H1 (cell line): ENCODE measurements at regions of chr6 and their contacts with region 1.

Region 1: DNA sequence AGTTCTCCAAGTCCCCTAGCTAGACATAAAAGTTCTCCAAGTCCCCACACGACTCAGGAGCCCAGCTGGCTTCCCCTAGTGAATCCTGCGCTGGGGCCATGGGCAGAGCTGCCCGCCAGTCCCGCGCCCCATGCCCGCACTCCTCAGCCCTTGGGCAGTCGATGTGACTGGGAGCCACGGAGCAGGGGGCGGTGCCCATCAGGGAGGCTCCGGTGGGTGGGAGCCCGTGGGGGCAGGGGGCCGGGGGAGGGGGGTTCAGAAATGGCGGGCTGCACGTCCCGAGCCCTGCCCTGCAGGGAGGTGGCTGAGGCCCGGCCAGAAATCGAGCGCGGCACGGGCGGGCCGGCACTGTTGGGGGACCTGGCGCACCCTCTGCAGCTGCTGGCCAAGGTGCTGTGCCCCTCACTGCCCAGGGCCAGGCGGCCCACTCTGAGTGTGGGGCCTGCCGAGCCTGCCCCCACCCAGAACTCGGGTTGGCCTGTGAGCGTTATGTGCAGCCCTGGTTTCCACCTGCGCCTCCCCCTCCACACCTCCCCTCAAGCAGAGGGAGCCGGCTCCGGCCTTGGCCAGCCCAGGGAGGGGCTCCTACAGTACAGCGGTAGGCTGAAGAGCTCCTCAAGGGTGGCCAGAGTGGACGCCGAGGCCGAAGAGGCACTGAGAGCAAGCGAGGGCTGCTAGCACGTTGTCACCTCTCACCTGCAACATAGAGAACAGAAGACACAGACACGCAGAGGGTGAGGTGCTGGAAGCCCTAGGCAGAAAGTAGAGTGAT is 11.4 kb downstream of the GSTA5 start:
- DNase-seq: no peak
- H3K4me3 ChIP-seq: no peak overlapping the region
- H3K27ac ChIP-seq: no peak overlapping the region
- H3K4me1 ChIP-seq: no peaks in the 10 kb centered on the region
- H3K27me3 ChIP-seq: no peaks in the 10 kb centered on the region
- CTCF ChIP-seq: no peak
- EP300 ChIP-seq: no peak
- POLR2A ChIP-seq: no peak
- RAD21 ChIP-seq: no peak

Region 2: DNA sequence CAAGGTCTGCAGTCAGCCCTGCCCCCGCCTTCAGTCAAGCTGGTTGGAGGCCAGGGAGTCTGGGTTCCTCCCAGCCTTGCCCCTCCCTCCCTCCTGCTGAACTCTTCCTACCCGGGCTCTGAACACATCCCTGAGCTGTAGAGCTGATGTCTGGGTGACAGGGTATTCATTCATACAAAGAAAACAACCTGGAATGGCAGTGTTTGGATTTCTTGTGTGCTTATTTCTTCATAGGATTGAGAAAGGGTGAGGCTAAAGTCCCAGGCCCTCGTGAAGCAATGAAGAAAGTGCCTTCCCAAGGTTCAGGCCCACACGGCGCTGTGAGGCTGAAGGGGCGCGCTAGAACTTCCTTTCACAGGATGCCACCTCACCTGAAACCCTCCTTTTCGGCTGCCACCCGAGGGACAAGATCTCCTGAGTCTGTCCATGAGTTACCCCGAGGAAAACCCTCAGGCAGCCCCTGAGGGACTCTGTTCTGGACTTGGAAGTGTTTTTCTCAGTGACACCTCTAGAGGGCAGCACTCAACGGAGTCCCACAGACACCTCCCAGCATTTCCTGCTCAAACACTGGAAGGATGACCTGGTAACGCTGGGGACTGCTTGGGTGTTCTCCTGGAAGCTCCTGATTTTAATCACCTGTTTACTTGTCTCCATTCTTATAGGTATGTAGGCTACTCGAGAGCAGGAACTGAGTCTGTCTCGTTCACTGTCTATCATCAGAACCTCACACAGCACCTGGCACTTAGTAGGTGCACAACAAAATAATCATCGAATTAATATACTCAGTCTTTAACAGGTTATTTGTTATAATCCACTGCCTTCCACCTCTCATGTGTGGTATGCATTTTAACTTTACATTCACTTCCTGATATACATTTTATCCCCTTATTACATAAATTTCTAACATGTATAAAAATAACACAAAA is 13.8 kb before region 1 on chr6:
- CTCF ChIA-PET with region 1: interaction called, 12 read pairs
- POLR2A ChIA-PET with region 1: no interaction called
- DNase-seq: peak; percentile 34 to 79
- H3K4me3 ChIP-seq: no peak overlapping the region
- H3K27ac ChIP-seq: no peak overlapping the region
- H3K4me1 ChIP-seq: no peaks in the 10 kb centered on the region
- H3K27me3 ChIP-seq: no peaks in the 10 kb centered on the region
- CTCF ChIP-seq: peak; percentile 55 to 77 (median 74)
- EP300 ChIP-seq: no peak
- POLR2A ChIP-seq: no peak
- RAD21 ChIP-seq: peak; percentile 62 to 70

Region 3: GRCh38 chr6:52839119-52840055 is 10.2 kb after region 1 on chr6:
- CTCF ChIA-PET with region 1: interaction called, 10 read pairs
- POLR2A ChIA-PET with region 1: no interaction called
- DNase-seq: peak; percentile 50 to 82
- H3K4me3 ChIP-seq: no peak overlapping the region
- H3K27ac ChIP-seq: no peak overlapping the region
- H3K4me1 ChIP-seq: no peaks in the 10 kb centered on the region
- H3K27me3 ChIP-seq: peaks cover 0 to 2% (median 1%) of the 10 kb centered on the region in 4 experiments; a peak in 1 of 7 replicates
- CTCF ChIP-seq: peak; percentile 68 to 79 (median 79)
- EP300 ChIP-seq: no peak
- POLR2A ChIP-seq: no peak
- RAD21 ChIP-seq: peak; percentile 70 to 77